ENCODE measurements at regions of chr9 and their contacts with region 1.

Region 1: GRCh38 chr9:16352791-16353411 is 517.6 kb downstream of the BNC2 start:
- DNase-seq: no peak
- ATAC-seq: peak in 3 of 4 donors; percentile 20 to 61 (median 44)
- H3K4me3 ChIP-seq: no peak overlapping the region
- H3K27ac ChIP-seq: no peak overlapping the region
- H3K4me1 ChIP-seq: no peaks in the 10 kb centered on the region
- H3K27me3 ChIP-seq: no peaks in the 10 kb centered on the region
- CTCF ChIP-seq: no peak

Region 2: DNA sequence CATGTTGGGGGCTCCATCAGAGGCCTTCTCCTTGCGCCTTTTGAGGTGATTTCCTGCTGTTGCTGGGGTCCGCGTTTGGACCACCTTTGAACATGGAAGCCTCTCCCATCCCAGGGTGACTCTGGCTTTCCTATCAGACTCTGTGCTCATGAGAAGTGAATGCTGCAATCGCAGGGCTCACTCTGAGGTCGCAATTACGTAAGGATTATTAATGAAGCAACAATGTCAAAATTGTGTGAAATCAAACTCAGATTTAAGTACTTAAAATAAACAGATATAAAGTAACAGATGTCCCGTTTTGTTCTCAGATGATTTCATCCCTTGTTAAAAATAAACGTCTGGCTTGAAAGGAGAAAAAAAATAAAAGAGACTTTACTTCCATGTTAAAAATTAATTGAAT is 116.6 kb before region 1 on chr9:
- intact Hi-C with region 1: loop called in 1 of 3 experiments (anchors 5 kb)
- DNase-seq: no peak
- ATAC-seq: peak in 1 of 4 donors; percentile 32
- H3K4me3 ChIP-seq: no peak overlapping the region
- H3K27ac ChIP-seq: no peak overlapping the region
- H3K4me1 ChIP-seq: no peaks in the 10 kb centered on the region
- H3K27me3 ChIP-seq: no peaks in the 10 kb centered on the region
- CTCF ChIP-seq: no peak

Region 3: DNA sequence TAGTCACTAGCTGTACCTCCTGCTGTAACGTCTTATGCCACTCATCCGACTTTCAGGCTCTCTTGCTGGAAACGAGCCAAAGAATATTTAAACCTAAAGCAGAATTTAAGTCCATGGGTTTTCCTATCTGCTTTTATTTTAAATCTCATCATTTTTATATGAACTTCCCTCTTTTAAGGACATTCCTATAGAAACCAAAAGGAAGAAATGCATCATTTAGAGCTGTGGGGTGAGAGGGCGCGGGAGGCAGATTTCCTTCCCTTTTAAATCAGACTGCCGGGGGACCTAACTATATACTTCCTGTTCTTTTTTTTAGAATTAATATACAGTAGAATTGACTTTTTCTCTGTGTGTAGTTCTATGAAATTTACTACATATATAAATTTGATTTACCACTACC is 48.8 kb after region 1 on chr9:
- intact Hi-C with region 1: no loop called
- DNase-seq: no peak
- ATAC-seq: peak in 1 of 4 donors; percentile 31
- H3K4me3 ChIP-seq: no peak overlapping the region
- H3K27ac ChIP-seq: no peak overlapping the region
- H3K4me1 ChIP-seq: no peaks in the 10 kb centered on the region
- H3K27me3 ChIP-seq: no peaks in the 10 kb centered on the region
- CTCF ChIP-seq: no peak

Region 4: GRCh38 chr9:16553869-16554540 is 201.1 kb after region 1 on chr9:
- intact Hi-C with region 1: no loop called
- DNase-seq: no peak
- ATAC-seq: no peak
- H3K4me3 ChIP-seq: no peak overlapping the region
- H3K27ac ChIP-seq: no peak overlapping the region
- H3K4me1 ChIP-seq: no peaks in the 10 kb centered on the region
- H3K27me3 ChIP-seq: no peaks in the 10 kb centered on the region
- CTCF ChIP-seq: no peak

Region 5: GRCh38 chr9:16705121-16705604 is 352.3 kb after region 1 on chr9:
- intact Hi-C with region 1: no loop called
- DNase-seq: peak; percentile 28 to 72 (median 54)
- ATAC-seq: peak; percentile 79 to 89 (median 84)
- H3K4me3 ChIP-seq: no peak overlapping the region
- H3K27ac ChIP-seq: peak overlapping the region; percentile 51 to 70 (median 60)
- H3K4me1 ChIP-seq: no peaks in the 10 kb centered on the region
- H3K27me3 ChIP-seq: no peaks in the 10 kb centered on the region
- CTCF ChIP-seq: no peak